B cell (primary cell): ENCODE measurements at regions of chr1 and their contacts with region 1.

Region 1: GRCh38 chr1:205255941-205256780 is 28.4 kb downstream of the TMCC2 start:
- DNase-seq: peak; percentile 85
- ATAC-seq: peak; percentile 97
- H3K4me3 ChIP-seq: no peak overlapping the region
- H3K4me3 Mint-ChIP-seq: no peak overlapping the region
- H3K27ac ChIP-seq: no peak overlapping the region
- H3K27ac Mint-ChIP-seq: no peak overlapping the region
- H3K4me1 ChIP-seq: peaks cover 0 to 4% of the 10 kb centered on the region in 2 donors
- H3K4me1 Mint-ChIP-seq: no peaks in the 10 kb centered on the region
- H3K27me3 ChIP-seq: peaks cover 0 to 6% (median 0%) of the 10 kb centered on the region in 4 experiments
- H3K27me3 Mint-ChIP-seq: no peaks in the 10 kb centered on the region
- CTCF ChIP-seq: peak; percentile 93

Region 2: DNA sequence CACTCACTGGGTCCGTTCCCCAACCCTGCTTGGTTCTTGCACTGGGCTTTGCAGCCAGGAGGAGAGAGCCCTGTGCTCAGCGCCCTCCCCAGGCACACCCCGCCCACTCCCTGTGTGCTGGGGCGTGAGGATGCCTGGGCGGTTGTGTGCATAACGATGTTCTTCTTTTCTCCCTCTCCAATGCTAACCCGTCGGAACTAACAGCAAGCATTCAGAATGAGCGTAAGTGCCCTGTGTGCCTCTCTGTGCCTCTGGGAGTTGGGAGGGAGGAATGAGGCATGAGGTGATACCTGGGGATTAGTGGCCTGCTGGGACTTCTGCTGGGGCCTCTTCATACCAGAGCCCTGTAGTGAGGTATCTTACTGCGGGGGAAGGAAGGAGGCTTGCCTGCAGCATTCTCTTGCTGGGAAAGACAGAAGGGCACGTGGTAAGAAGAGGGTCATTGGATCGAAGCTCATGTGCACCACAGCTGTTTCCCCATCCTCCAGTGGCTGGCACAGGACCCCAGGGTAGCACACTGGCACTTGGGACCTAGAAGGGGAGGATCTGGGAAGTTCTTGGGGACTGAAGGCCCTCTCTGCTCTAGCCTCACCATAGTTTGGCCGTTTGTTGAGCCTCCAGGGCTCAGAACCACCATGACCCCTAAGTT is 305.7 kb before region 1 on chr1:
- CTCF ChIA-PET with region 1: no interaction called
- POLR2A ChIA-PET with region 1: no interaction called
- intact Hi-C with region 1: no loop called
- DNase-seq: no peak
- ATAC-seq: no peak
- H3K4me3 ChIP-seq: no peak overlapping the region
- H3K4me3 Mint-ChIP-seq: no peak overlapping the region
- H3K27ac ChIP-seq: no peak overlapping the region
- H3K27ac Mint-ChIP-seq: no peak overlapping the region
- H3K4me1 ChIP-seq: peaks cover 0 to 7% of the 10 kb centered on the region in 2 donors
- H3K4me1 Mint-ChIP-seq: peaks cover 6% of the 10 kb centered on the region
- H3K27me3 ChIP-seq: peaks cover 0 to 11% (median 2%) of the 10 kb centered on the region in 4 experiments
- H3K27me3 Mint-ChIP-seq: peaks cover 27% of the 10 kb centered on the region
- CTCF ChIP-seq: no peak

Region 3: GRCh38 chr1:204989266-204990058 is 266.7 kb before region 1 on chr1:
- CTCF ChIA-PET with region 1: interaction called, 69 read pairs
- POLR2A ChIA-PET with region 1: no interaction called
- intact Hi-C with region 1: no loop called
- DNase-seq: peak; percentile 77
- ATAC-seq: peak; percentile 71
- H3K4me3 ChIP-seq: no peak overlapping the region
- H3K4me3 Mint-ChIP-seq: no peak overlapping the region
- H3K27ac ChIP-seq: no peak overlapping the region
- H3K27ac Mint-ChIP-seq: no peak overlapping the region
- H3K4me1 ChIP-seq: peaks cover 15 to 21% of the 10 kb centered on the region in 2 donors
- H3K4me1 Mint-ChIP-seq: peaks cover 22% of the 10 kb centered on the region
- H3K27me3 ChIP-seq: peaks cover 0 to 2% (median 0%) of the 10 kb centered on the region in 4 experiments
- H3K27me3 Mint-ChIP-seq: peaks cover 5% of the 10 kb centered on the region
- CTCF ChIP-seq: peak; percentile 81

Region 4: GRCh38 chr1:205082431-205082830 is 173.7 kb before region 1 on chr1:
- CTCF ChIA-PET with region 1: no interaction called
- POLR2A ChIA-PET with region 1: no interaction called
- intact Hi-C with region 1: no loop called
- DNase-seq: no peak
- ATAC-seq: no peak
- H3K4me3 ChIP-seq: no peak overlapping the region
- H3K4me3 Mint-ChIP-seq: no peak overlapping the region
- H3K27ac ChIP-seq: no peak overlapping the region
- H3K27ac Mint-ChIP-seq: no peak overlapping the region
- H3K4me1 ChIP-seq: no peaks in the 10 kb centered on the region
- H3K4me1 Mint-ChIP-seq: no peaks in the 10 kb centered on the region
- H3K27me3 ChIP-seq: no peaks in the 10 kb centered on the region
- H3K27me3 Mint-ChIP-seq: no peaks in the 10 kb centered on the region
- CTCF ChIP-seq: no peak

Region 5: GRCh38 chr1:205141236-205142101 is 114.7 kb before region 1 on chr1:
- CTCF ChIA-PET with region 1: interaction called, 18 read pairs
- POLR2A ChIA-PET with region 1: no interaction called
- intact Hi-C with region 1: loop called (anchors 1 kb)
- DNase-seq: peak; percentile 85
- ATAC-seq: peak; percentile 85
- H3K4me3 ChIP-seq: no peak overlapping the region
- H3K4me3 Mint-ChIP-seq: peak overlapping the region; percentile 50
- H3K27ac ChIP-seq: no peak overlapping the region
- H3K27ac Mint-ChIP-seq: no peak overlapping the region
- H3K4me1 ChIP-seq: peaks cover 15 to 23% of the 10 kb centered on the region in 2 donors
- H3K4me1 Mint-ChIP-seq: peaks cover 28% of the 10 kb centered on the region
- H3K27me3 ChIP-seq: no peaks in the 10 kb centered on the region
- H3K27me3 Mint-ChIP-seq: no peaks in the 10 kb centered on the region
- CTCF ChIP-seq: peak; percentile 85

Region 6: DNA sequence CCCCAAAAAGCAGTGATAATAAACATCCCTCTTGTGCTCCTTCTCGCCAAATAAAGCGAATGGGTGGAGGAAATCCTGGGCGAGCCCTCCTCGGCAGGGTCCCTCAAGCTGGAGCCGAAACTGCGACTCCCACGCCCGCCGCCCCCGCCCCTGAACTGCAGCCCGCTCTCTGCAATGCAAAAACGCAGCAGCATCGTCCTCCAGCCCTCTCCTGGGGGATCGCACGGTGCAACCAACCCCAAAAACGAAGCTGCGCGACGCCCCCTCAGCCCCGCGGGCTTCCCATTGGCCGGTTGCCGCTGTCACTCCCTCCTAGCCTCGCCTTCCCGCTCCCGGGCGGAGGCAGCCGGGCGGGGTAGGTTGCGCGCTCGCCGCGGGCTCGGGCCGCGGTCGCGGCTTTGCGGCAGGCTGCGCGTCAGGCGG is 28.6 kb before region 1 on chr1 and contains the start of gene TMCC2:
- CTCF ChIA-PET with region 1: interaction called, 135 read pairs
- POLR2A ChIA-PET with region 1: interaction called, 6 read pairs
- intact Hi-C with region 1: loop called (anchors 1 kb)
- DNase-seq: peak; percentile 83
- ATAC-seq: peak; percentile 87
- H3K4me3 ChIP-seq: peak within 1 kb of the TSS; percentile 21 to 73 (median 59)
- H3K4me3 Mint-ChIP-seq: peak within 1 kb of the TSS; percentile 97
- H3K27ac ChIP-seq: no peak within 1 kb of the TSS
- H3K27ac Mint-ChIP-seq: peak within 1 kb of the TSS; percentile 77
- H3K4me1 ChIP-seq: peaks cover 17 to 33% of the 10 kb centered on the region in 2 donors
- H3K4me1 Mint-ChIP-seq: peaks cover 30% of the 10 kb centered on the region
- H3K27me3 ChIP-seq: peaks cover 0 to 14% (median 2%) of the 10 kb centered on the region in 4 experiments
- H3K27me3 Mint-ChIP-seq: peaks cover 21% of the 10 kb centered on the region
- CTCF ChIP-seq: no peak
- total RNA-seq, gene TMCC2: 3.3 and 4.0 TPM in 2 replicates

Region 7: GRCh38 chr1:205335643-205336091 is 79.5 kb after region 1 on chr1:
- CTCF ChIA-PET with region 1: interaction called, 10 read pairs
- POLR2A ChIA-PET with region 1: interaction called, 3 read pairs
- intact Hi-C with region 1: no loop called
- DNase-seq: peak; percentile 87
- ATAC-seq: peak; percentile 96
- H3K4me3 ChIP-seq: no peak overlapping the region
- H3K4me3 Mint-ChIP-seq: no peak overlapping the region
- H3K27ac ChIP-seq: no peak overlapping the region
- H3K27ac Mint-ChIP-seq: no peak overlapping the region
- H3K4me1 ChIP-seq: peaks cover 0 to 4% of the 10 kb centered on the region in 2 donors
- H3K4me1 Mint-ChIP-seq: peaks cover 9% of the 10 kb centered on the region
- H3K27me3 ChIP-seq: no peaks in the 10 kb centered on the region
- H3K27me3 Mint-ChIP-seq: no peaks in the 10 kb centered on the region
- CTCF ChIP-seq: peak; percentile 91

Region 8: GRCh38 chr1:205354259-205354904 is 98.2 kb after region 1 on chr1:
- CTCF ChIA-PET with region 1: interaction called, 11 read pairs
- POLR2A ChIA-PET with region 1: no interaction called
- intact Hi-C with region 1: no loop called
- DNase-seq: peak; percentile 78
- ATAC-seq: peak; percentile 58
- H3K4me3 ChIP-seq: no peak overlapping the region
- H3K4me3 Mint-ChIP-seq: no peak overlapping the region
- H3K27ac ChIP-seq: no peak overlapping the region
- H3K27ac Mint-ChIP-seq: no peak overlapping the region
- H3K4me1 ChIP-seq: peaks cover 16 to 20% of the 10 kb centered on the region in 2 donors
- H3K4me1 Mint-ChIP-seq: peaks cover 29% of the 10 kb centered on the region
- H3K27me3 ChIP-seq: peaks cover 0 to 4% (median 0%) of the 10 kb centered on the region in 4 experiments
- H3K27me3 Mint-ChIP-seq: peaks cover 19% of the 10 kb centered on the region
- CTCF ChIP-seq: peak; percentile 95